Panc1 (cell line): ENCODE measurements at regions of chr5 and their contacts with region 1.

Region 1: GRCh38 chr5:138035605-138036537 is 3.0 kb upstream of the FAM13B start:
- DNase-seq: peak; percentile 86
- ATAC-seq: peak; percentile 82
- H3K4me3 ChIP-seq: no peak overlapping the region
- H3K27ac ChIP-seq: peak overlapping the region; percentile 29; the same call in 1 of the 2 replicates
- H3K4me1 ChIP-seq: peaks cover 17% of the 10 kb centered on the region
- H3K27me3 ChIP-seq: no peaks in the 10 kb centered on the region
- CTCF ChIP-seq: peak; percentile 93

Region 2: DNA sequence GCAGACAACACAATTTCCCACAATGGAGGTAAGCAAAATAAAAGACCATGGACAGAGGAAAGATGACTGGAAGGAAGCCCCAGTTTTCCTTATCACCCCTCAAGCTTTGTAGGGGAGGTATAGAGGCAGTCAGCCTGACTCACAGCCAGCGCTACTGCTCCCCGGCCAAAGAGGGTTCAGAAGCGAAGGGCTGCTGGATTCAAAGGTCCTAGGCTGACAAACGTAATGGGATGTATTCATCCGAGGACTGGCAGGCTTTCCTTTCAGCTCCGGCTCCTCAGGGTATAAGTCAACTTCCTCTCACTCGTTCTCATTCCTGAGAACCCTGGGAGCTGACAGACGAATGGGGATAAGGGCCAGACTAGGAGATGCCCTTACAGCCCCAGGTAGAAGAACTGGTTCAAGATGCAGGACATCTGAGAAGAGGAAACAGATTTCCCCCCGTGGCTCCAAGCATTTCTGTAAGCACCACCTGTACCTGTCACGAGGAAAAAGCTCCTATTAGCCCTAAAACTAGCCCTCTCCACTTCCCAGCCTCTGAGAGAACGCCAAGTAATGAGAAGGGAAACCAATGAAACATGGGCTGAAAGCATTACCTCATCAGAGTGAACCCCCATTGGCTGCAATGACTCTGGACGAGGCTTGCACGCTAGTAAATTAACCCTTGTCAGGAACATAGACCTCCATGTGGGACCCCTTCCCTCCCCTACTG is 19.1 kb after region 1 on chr5:
- CTCF ChIA-PET with region 1: interaction called, 12 read pairs
- POLR2A ChIA-PET with region 1: interaction called, 6 read pairs
- in situ Hi-C with region 1: no loop called
- intact Hi-C with region 1: no loop called
- DNase-seq: no peak
- ATAC-seq: peak; percentile 65
- H3K4me3 ChIP-seq: no peak overlapping the region; a peak in 1 of 4 replicates
- H3K27ac ChIP-seq: no peak overlapping the region
- H3K4me1 ChIP-seq: no peaks in the 10 kb centered on the region
- H3K27me3 ChIP-seq: no peaks in the 10 kb centered on the region
- CTCF ChIP-seq: no peak

Region 3: DNA sequence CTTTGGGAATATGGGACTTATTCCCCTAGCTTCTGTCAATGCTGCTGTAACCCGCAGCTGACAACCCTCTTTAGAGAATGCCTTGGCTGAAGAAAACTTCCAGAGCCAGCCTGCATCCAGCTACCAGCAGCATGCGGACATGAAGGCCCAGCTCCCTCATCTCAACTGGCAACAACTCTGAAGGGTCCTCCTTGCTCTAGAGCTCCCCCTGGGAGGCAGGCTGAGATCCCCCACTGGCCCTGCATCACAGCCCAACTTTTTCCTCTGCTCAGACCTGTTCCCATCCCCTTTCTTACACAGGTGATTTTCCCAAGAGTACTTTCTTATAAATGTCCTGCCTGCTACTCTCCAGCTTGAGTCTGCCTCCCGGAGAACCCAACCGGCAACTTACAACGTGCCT is 29.2 kb after region 1 on chr5:
- CTCF ChIA-PET with region 1: interaction called, 14 read pairs
- POLR2A ChIA-PET with region 1: interaction called, 5 read pairs
- in situ Hi-C with region 1: no loop called
- intact Hi-C with region 1: loop called (anchors 1 kb)
- DNase-seq: no peak
- ATAC-seq: no peak
- H3K4me3 ChIP-seq: no peak overlapping the region
- H3K27ac ChIP-seq: no peak overlapping the region
- H3K4me1 ChIP-seq: no peaks in the 10 kb centered on the region
- H3K27me3 ChIP-seq: no peaks in the 10 kb centered on the region
- CTCF ChIP-seq: peak; percentile 69

Region 4: DNA sequence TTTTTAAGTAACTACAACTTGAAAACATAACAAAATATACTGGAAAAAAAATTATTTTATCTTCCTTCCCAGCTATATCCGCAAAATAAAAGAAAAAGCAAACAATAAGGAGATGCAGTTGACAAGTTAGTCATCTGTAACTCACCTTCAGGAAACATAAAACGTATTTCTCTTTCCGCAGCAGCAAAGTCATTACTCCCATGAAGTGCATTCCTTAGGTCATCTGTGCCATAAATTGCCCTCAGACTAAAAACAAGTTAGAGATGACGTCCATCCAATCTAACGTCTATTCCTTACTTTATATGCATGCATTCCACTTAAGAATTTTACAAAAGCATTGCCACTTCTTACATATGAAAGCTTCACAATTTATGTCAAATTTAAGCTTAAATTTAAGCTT is 92.5 kb after region 1 on chr5:
- CTCF ChIA-PET with region 1: interaction called, 19 read pairs
- POLR2A ChIA-PET with region 1: no interaction called
- in situ Hi-C with region 1: no loop called
- intact Hi-C with region 1: loop called (anchors 1 kb)
- DNase-seq: no peak
- ATAC-seq: no peak; the same call in 1 of the 2 replicates
- H3K4me3 ChIP-seq: no peak overlapping the region
- H3K27ac ChIP-seq: no peak overlapping the region
- H3K4me1 ChIP-seq: peaks cover 4% of the 10 kb centered on the region; the same call in 1 of the 2 replicates
- H3K27me3 ChIP-seq: no peaks in the 10 kb centered on the region
- CTCF ChIP-seq: no peak

Region 5: GRCh38 chr5:138216799-138217198 is 180.9 kb after region 1 on chr5:
- CTCF ChIA-PET with region 1: interaction called, 14 read pairs
- POLR2A ChIA-PET with region 1: no interaction called
- in situ Hi-C with region 1: no loop called
- intact Hi-C with region 1: no loop called
- DNase-seq: no peak
- ATAC-seq: no peak
- H3K4me3 ChIP-seq: no peak overlapping the region
- H3K27ac ChIP-seq: no peak overlapping the region
- H3K4me1 ChIP-seq: peaks cover 7% of the 10 kb centered on the region
- H3K27me3 ChIP-seq: no peaks in the 10 kb centered on the region
- CTCF ChIP-seq: no peak

Region 6: DNA sequence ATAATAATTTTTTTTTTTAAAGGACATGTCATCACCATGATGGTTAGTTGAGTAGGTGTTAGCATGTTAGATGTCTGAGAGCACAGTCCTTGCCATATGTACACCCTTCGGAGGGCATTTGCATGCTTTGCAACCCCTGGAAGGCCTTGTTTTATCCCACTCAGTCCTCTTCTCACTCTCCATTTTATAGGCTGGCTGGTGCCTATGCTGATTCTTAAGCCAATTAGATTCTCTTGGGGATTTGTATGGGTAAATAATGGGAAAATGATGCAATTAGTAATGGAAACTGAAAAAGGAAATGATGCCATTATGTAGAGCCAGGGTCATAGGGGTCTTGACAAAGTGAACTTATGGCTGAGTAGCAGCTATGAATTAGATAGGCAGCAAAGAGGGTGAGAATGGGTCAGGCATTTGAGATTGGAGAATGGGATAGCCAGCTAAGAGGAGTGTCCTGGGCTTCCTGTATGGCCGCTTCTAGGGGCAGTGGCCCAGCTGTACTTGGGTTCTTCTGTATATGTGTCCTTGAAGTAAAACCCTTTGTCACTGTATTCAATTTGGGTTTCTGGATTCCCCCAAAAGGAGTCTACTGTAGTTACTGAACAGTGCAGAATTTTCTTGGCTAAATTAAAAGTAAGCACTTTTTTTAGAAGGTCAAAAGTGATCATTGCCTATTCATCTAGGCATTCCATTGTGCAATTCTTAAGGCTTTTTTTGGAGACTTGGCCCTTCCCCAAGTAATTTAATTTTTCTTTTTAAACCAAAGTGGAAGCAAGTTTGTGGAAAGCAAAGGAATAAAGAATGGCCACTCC is 807.6 kb after region 1 on chr5:
- CTCF ChIA-PET with region 1: no interaction called
- POLR2A ChIA-PET with region 1: interaction called, 11 read pairs
- in situ Hi-C with region 1: no loop called
- intact Hi-C with region 1: no loop called
- DNase-seq: no peak
- ATAC-seq: no peak
- H3K4me3 ChIP-seq: no peak overlapping the region
- H3K27ac ChIP-seq: no peak overlapping the region
- H3K4me1 ChIP-seq: peaks cover 10% of the 10 kb centered on the region; the same call in 1 of the 2 replicates
- H3K27me3 ChIP-seq: no peaks in the 10 kb centered on the region
- CTCF ChIP-seq: no peak